ENCODE measurements at regions of chr1 and their contacts with region 1.

Region 1: GRCh38 chr1:77978969-77979876 is at the start of gene FUBP1:
- DNase-seq: peak; percentile 94
- H3K4me3 ChIP-seq: peak within 1 kb of the TSS; percentile 81
- H3K27me3 ChIP-seq: no peaks in the 10 kb centered on the region
- CTCF ChIP-seq: peak; percentile 82
- polyA plus RNA-seq, gene FUBP1: 79.0 and 96.2 TPM in 2 replicates

Region 2: DNA sequence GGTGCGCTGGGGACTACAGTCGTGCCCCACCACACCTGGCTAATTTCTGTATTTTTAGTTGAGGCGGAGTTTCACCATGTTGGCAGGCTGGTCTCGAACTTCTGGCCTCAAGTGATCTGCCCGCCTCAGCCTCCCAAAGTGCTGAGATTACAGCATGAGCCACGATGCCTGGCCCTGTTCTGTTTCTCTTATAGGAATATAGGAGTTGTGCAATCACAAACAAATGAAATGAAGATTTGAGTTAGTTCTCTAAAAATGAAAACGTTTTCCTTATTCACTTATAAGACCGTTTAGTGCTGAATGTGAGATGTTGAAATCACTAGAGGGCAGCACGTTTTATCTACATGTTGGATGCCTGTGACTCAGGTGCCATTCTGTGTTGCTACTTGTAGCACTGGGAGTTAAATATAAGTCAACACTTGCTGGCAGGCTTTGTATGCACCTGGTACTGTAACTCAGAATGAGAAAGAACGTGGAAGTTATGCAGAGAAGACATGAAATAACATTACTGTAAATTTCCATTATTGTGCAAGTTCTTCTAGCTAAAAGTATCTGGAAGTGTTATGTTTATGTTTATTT is 154.0 kb before region 1 on chr1:
- CTCF ChIA-PET with region 1: no interaction called
- POLR2A ChIA-PET with region 1: no interaction called
- DNase-seq: peak; percentile 27
- H3K4me3 ChIP-seq: no peak overlapping the region
- H3K27me3 ChIP-seq: no peaks in the 10 kb centered on the region
- CTCF ChIP-seq: peak; percentile 34; the same call in 1 of the 2 replicates

Region 3: DNA sequence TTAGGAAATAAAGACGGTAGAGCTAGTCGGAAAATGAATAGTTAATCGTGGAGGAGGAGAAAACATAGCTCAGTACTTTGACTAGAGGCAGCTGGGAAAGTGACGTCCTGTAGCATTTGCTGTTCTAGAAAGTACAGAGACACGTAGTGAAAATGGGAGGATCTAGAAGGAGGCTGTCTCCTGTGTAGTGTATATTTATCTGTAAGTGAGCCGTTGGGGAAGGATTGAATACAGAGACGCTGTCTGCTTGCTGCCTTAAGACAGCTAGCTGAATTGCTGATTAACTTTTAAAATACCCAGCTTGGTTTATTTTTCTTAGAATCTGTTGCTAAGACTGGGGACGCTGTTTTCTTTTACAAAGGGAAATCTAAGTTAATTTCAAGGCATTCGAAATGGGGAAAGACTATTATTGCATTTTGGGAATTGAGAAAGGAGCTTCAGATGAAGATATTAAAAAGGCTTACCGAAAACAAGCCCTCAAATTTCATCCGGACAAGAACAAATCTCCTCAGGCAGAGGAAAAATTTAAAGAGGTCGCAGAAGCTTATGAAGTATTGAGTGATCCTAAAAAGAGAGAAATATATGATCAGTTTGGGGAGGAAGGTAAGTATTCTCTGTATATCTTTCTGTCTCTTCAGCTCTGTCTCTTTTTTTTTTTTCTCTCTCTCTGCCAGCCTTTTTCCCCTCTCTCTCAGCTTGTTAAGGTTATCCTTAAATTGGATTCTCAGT is 25.7 kb after region 1 on chr1 and contains the start of gene DNAJB4:
- CTCF ChIA-PET with region 1: interaction called, 9 read pairs
- POLR2A ChIA-PET with region 1: interaction called, 12 read pairs
- DNase-seq: peak; percentile 90
- H3K4me3 ChIP-seq: peak within 1 kb of the TSS; percentile 68
- H3K27me3 ChIP-seq: no peaks in the 10 kb centered on the region
- CTCF ChIP-seq: no peak
- polyA plus RNA-seq, gene DNAJB4: 16.7 and 39.6 TPM in 2 replicates

Region 4: DNA sequence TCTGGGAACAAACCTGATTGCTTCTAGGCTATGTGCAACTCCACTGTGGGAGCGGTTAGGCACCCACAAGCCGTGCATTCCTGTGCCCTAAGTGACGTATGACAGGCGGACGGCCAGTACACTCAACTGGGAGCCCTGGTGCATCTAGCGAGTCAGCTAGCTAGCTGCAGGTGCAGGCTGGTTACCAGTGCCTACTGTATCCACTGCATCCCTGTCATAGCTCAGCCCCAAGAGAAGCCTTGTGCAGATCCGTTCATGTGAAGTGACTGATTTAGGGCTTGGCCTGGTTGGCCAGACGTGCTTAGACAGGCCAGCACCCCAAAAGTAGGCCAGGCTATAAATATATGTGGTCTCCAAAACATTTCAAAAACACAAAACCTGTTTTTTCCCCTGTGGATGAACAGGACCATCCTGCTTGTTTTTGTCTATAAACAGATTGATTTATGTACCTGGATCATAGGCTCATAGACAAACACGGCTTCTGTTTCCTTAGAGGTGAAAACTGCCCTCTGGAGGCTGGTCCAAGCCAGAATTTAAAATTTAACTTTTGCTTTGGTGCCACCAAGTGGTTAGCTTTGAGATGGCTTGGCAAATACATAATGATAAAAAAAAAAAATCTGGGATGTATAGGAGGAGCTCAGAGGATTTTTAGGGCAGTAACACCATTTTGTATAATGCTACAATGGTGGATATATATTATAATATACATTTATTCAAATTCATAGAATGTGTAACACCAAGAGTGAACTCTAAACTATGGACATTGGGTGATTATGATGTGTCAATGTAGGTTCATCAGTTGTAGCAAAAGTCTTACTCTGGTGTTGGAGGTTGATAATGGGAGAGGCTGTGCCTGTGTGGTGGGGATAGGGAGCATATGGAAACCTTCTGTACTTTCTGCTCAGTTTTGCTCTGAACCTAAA is 135.1 kb after region 1 on chr1:
- CTCF ChIA-PET with region 1: interaction called, 11 read pairs
- POLR2A ChIA-PET with region 1: interaction called, 9 read pairs
- DNase-seq: no peak
- H3K4me3 ChIP-seq: no peak overlapping the region
- H3K27me3 ChIP-seq: no peaks in the 10 kb centered on the region
- CTCF ChIP-seq: peak; percentile 74